Endothelial cell of umbilical vein (primary cell): ENCODE measurements at regions of chr1 and their contacts with region 1.

Region 1: GRCh38 chr1:223068900-223069665 is 74.0 kb downstream of the TLR5 start:
- DNase-seq: no peak
- H3K4me3 ChIP-seq: no peak overlapping the region
- H3K27ac ChIP-seq: no peak overlapping the region
- H3K4me1 ChIP-seq: no peaks in the 10 kb centered on the region
- H3K27me3 ChIP-seq: peaks cover 0 to 1% of the 10 kb centered on the region in 2 experiments
- CTCF ChIP-seq: no peak
- POLR2A ChIP-seq: no peak

Region 2: DNA sequence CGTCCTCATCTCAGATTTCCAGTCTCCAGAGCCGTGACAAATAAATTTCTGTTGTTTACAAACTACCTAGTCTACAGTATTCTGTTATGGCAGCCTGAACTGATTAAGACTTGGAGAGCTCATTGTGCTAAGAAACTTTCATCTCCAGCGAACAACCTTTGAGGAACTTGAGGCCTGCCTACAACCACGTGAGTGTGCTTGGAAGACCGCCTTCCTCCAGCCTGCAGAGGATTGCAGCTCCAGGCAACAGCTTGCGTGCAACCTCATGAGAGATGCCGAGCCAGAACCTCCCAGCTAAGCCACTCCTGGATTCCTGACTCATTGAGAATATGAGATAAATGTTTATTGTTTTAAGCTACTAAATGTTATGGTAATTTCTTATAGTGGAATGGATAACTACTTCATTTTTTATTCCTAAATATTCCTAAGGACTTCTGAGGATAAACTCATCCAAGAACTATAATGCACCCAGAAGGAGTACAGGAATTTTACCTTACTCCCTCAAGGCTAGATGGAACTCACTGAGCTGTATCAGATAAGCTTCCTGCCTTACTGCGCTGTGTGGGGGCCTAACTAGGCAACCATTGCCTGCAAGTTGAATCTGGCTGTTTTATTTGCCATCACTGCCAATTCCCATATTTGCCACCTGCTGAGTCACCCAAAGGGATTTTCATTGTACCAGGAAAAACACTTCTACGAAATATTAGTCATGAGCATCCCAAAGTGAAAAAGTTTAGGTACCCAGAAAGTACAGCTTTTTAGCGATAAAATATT is 314.5 kb before region 1 on chr1:
- CTCF ChIA-PET with region 1: no interaction called
- POLR2A ChIA-PET with region 1: no interaction called
- dilution Hi-C with region 1: no loop called
- intact Hi-C with region 1: no loop called
- DNase-seq: no peak
- H3K4me3 ChIP-seq: no peak overlapping the region
- H3K27ac ChIP-seq: no peak overlapping the region
- H3K4me1 ChIP-seq: no peaks in the 10 kb centered on the region
- H3K27me3 ChIP-seq: peaks cover 0 to 2% of the 10 kb centered on the region in 2 experiments
- CTCF ChIP-seq: no peak
- POLR2A ChIP-seq: no peak

Region 3: GRCh38 chr1:223016890-223017289 is 52.2 kb before region 1 on chr1:
- CTCF ChIA-PET with region 1: no interaction called
- POLR2A ChIA-PET with region 1: no interaction called
- dilution Hi-C with region 1: no loop called
- intact Hi-C with region 1: loop called (anchors 2 kb)
- DNase-seq: no peak
- H3K4me3 ChIP-seq: no peak overlapping the region
- H3K27ac ChIP-seq: no peak overlapping the region
- H3K4me1 ChIP-seq: no peaks in the 10 kb centered on the region
- H3K27me3 ChIP-seq: no peaks in the 10 kb centered on the region
- CTCF ChIP-seq: peak in 1 of 2 donors; percentile 17
- POLR2A ChIP-seq: no peak

Region 4: DNA sequence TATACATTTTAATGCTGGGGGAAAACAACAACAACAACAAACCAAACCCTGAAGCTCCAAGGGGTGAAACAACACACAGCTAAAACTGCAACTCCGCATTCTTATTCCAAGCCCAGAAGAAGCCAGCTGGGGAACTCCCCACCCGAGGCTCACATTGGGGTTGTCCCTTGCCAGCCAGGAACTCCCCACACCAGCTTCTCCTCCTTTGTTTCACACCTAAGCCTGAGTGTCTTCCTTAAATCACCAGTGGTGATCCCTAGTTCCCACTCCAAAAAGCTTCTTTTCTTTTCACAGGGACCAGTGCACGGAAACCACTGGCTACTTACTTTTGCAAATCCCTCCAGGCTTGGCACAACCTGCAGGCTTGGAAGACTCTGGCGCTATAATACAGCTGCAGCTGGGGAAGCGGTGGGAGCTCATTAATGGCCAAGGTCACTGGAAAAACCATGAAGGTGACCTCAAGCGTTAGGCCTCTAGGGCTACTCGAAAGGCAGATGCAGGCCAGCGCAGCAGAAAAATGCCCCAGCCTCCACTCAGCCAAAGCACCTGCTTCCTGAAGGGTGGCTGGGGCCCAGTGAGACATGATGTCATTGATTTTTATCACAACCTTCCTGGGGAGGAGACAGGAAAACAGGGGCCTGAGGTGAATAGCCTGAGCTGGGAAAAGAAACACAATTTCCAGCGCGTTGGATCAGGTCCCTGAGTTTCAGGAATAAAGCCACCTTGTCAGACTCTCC is 33.9 kb after region 1 on chr1:
- CTCF ChIA-PET with region 1: no interaction called
- POLR2A ChIA-PET with region 1: no interaction called
- dilution Hi-C with region 1: no loop called
- intact Hi-C with region 1: no loop called
- DNase-seq: peak; percentile 98
- H3K4me3 ChIP-seq: peak overlapping the region in 1 of 3 experiments; percentile 9
- H3K27ac ChIP-seq: peak overlapping the region; percentile 75
- H3K4me1 ChIP-seq: peaks cover 26% of the 10 kb centered on the region
- H3K27me3 ChIP-seq: peaks cover 0 to 3% of the 10 kb centered on the region in 2 experiments
- CTCF ChIP-seq: no peak
- POLR2A ChIP-seq: no peak